Cardiac septum (tissue), 1 donor: ENCODE measurements at regions of chr11 and their contacts with region 1.

Region 1: DNA sequence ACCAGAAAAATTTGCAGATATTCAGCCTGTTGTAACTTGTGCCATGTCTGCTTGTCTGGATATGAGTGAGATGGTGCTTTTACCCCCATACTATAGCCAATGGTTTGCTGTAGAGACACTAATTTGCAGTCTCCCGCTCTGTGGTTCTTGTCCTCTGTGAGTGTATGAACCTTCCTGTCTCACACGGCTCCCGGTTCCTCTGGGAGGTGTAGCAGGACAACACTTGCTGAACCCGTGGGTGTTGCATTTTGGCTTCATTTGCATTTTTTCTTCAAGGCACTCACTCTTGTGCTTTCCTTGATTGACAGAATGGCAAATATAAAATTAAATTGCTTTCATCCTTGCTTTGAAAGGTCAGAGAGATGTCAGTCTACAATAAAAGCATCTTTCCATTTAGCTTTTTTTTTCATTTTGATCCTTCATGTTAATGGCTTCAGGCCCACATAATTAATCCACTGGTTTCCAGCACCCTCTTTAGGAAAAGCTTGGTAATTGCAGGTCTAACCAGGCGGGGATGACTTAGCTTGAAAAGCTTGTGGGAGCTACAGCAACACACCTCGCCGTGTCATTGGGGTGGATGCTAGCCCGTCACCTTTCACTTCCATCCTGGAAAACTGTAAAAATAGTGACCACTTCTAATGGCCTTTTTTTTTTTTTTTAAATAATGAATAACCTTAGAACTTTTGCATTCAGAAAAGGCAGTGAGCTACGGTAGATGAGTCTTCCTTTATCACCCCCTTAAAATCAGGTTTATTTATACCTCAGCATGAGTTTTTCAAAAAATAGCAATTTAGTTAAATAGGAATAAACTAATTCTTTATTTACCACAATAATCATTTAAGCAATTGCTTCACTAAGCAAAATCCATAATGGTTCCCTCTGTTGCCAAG is 27.4 kb upstream of the ST14 start:
- DNase-seq: no peak

Region 2: DNA sequence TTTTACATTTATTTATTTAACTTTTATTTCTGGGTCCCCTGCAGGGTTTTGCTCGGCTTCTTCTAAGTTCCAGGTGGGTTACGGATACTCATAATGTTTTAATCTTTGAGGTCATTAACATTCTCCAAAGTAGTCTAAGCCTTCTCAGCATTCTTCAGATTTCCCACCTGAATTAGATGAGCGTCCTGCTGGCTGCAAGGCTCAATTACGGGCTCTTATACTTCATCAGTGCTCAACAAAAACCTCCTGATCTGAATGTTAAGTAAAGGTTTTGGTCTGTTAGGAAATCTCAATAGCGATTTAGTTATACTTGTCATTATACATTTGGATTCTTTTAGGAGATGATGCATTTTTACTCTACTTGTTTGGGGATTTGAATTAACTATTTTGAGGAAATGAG is 209.5 kb before region 1 on chr11:
- intact Hi-C with region 1: loop called (anchors 2 kb)
- DNase-seq: no peak

Region 3: DNA sequence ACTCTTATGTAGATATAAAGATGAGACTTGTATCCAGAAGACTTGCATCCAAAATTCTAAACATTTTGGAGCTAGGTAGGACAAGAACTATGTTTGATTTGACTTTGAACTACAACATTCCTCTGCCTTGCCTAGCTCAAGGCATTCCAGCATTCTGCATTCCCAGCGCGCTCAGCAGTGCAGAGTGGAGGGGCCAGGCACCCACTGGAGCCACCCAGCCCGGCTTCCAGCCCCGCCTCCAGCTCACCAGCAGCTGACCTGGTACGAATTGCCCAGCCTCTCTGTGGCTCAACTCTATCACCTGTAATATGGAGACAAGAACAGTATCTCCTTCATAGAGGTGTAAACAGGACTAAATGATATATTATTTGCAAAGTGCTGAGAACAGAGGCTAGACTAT is 158.4 kb before region 1 on chr11:
- intact Hi-C with region 1: no loop called
- DNase-seq: no peak

Region 4: DNA sequence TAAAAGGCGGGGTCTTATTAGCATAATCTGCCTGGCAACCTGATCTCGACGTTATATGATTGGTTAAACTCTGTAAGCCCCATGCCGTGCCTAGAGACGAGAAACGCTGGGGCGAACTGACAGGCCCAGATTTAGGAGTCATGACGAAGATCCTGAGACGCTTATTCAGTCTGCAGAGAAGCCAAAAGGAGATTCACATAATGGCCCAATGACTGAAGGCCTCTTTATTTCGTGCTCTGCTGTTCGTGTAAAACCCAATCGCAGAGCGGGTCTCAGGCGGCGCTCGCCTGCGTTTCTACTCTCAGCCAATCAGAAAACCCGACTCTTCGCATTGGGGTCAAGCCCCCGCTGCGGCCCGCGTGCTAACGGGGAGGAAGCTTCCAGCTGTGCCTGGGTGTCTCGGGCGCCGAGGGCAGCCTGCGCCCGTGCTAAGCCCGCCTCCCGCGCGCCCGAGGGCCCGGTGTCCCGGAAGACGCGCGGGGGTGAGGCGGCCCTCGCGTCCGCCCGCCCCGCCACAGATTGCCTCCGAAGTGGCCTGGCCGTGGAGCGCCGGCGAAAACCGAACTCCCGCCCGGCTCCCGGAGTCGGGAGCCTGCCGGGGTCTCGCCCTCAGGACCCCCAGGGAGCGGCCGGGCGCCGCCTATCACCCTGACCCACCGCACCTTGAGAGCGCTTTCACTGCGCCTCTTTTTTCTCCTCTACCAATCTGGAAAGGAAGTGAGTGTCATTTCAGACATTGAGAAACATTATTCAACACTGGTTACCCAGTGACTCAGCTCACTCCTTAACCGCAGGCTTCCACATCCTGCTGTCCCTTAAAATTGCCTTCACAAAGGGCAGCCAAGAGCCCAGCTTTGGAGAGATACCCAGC is 129.1 kb before region 1 on chr11:
- intact Hi-C with region 1: loop called (anchors 5 kb)
- DNase-seq: peak; percentile 96

Region 5: DNA sequence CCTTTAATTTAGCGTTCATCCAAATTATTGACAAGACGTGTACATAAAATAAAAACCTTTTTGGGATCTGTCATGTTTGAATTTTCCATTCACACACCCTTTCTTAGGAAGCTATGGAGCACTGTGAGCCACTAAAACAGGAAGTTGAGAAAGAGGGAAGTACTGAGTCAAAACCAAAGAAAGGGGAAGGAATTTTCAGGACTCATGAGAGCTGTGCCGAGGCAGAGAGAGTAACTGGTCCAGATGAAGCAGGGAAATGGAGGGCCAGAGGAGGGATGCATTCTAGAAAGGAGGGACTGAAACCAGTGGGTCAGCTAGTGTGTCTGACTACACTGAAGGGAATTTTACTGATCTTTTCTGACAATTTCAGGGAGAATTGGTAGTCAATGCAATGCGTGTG is 37.6 kb before region 1 on chr11:
- intact Hi-C with region 1: no loop called
- DNase-seq: no peak

Region 6: GRCh38 chr11:130166457-130166784 is 34.2 kb after region 1 on chr11:
- intact Hi-C with region 1: no loop called
- DNase-seq: no peak